ENCODE measurements at regions of chr12 and their contacts with region 1.

Region 1: DNA sequence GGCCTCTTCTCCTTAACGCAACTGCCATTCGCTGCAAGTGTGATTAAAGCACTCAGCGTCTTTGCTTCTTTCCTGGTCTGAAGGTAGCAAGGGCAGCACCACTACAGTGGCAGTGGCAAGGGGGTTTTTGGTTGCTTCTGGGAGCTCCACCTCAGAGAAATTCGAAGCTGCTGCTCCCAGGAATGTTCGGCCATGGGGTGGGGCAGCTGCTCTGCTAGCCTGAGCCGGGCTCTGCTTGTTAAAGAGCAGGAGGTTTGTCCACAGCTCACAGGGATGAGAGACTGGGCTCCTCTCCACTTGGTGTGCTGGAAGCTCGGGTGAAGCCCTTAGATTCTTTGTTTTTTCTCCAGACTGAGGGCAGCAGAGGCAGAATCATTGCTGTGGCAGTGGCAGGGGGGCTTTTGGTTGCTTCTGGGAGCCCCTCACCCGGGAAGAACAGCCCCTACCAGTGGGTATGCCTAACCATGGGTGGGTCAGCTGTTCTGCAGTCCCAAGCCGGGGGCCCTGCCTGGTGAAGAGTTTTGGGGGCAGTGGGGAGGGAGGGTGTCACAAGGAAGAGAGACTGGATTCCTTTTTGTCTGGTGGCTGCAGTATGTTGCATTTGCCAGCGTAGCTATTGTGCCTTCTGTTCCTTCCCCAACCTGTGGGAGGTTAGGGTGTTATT is 340.2 kb downstream of the AEBP2 start:
- DNase-seq: peak; percentile 60 to 78
- ATAC-seq: peak; percentile 76
- H3K4me3 ChIP-seq: peak overlapping the region in 1 of 2 donors; percentile 6
- H3K27ac ChIP-seq: peak overlapping the region; percentile 43 to 94
- H3K4me1 ChIP-seq: no peaks in the 10 kb centered on the region
- H3K27me3 ChIP-seq: no peaks in the 10 kb centered on the region

Region 2: DNA sequence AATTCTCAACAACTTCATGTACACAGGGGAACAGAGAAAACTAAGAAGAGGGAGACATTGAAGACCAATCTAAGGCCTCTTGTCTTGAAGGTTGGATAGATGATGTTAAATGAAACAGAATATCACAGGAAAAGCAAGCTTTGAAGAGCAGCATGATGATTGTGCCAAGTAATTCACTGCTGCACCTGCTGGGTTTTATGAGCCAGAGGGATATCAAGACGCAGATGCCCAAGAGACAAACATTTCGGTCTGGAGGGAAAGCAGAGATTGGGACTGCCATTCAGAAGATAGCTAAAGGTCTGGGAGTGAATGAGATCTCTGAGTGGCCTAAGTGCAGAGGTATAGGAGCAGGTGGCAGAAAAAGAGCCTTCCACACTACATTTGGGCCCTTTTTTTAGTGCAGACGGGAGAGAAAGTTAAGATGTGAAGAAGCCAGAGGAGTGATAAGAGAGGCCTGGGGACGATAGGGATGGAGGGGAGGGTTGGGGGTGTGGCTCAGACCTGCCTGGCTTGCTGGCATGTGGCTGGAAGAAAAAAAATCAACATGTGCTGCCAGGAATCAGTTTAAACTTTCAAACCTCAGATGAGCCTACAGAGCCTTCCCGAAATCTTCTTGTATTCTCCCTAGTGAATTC is 139.6 kb before region 1 on chr12:
- intact Hi-C with region 1: no loop called
- DNase-seq: no peak
- ATAC-seq: no peak
- H3K4me3 ChIP-seq: no peak overlapping the region
- H3K27ac ChIP-seq: no peak overlapping the region
- H3K4me1 ChIP-seq: peaks cover 0 to 2% of the 10 kb centered on the region in 2 donors
- H3K27me3 ChIP-seq: no peaks in the 10 kb centered on the region

Region 3: DNA sequence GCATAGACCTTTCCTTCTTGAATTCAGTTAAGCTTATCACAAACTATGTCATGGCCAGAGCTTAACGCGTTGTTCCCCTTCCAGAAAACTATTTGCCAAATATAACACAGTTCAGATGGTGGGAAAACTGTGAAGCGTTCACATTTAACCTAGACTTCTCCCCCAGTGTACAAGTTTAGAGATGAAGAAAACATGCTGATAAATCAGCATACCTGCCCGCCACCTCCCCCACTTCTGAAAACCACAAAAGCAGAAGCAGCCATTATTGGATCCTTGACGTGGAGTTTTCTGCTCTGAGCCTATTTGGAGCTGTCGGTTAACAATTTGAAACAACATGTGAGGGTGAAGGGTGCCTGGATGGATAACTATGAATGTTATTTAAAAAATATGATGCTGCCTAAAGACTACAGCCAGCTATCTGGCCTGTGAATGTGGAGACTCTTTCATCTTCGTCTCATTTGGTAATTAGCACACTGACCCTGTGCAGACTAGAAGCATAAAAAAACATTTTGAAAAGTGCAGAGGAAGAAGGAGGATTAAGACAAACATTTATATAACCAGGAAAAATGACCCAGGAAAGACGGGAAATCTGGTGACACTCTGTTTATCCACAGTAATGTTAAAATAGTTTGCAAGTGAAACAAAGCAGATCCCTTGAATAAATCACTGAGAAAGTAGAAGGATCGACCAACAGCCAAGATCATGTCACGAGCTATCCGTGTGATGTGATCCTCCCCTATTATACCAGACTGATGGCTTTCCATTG is 68.0 kb after region 1 on chr12:
- intact Hi-C with region 1: loop called in 1 of 2 experiments (anchors 5 kb)
- DNase-seq: no peak
- ATAC-seq: peak; percentile 59
- H3K4me3 ChIP-seq: peak overlapping the region in 1 of 2 donors; percentile 32
- H3K27ac ChIP-seq: peak overlapping the region; percentile 95 to 96
- H3K4me1 ChIP-seq: peaks cover 4 to 17% of the 10 kb centered on the region in 2 donors
- H3K27me3 ChIP-seq: no peaks in the 10 kb centered on the region

Region 4: GRCh38 chr12:19885092-19885812 is 105.7 kb after region 1 on chr12:
- intact Hi-C with region 1: loop called (anchors 5 to 10 kb)
- DNase-seq: peak in 1 of 2 donors; percentile 44
- ATAC-seq: peak; percentile 68
- H3K4me3 ChIP-seq: no peak overlapping the region
- H3K27ac ChIP-seq: peak overlapping the region; percentile 98 to 100
- H3K4me1 ChIP-seq: peaks cover 10 to 17% of the 10 kb centered on the region in 2 donors
- H3K27me3 ChIP-seq: no peaks in the 10 kb centered on the region

Region 5: GRCh38 chr12:19893514-19893913 is 114.0 kb after region 1 on chr12:
- intact Hi-C with region 1: loop called (anchors 5 to 10 kb)
- DNase-seq: no peak
- ATAC-seq: no peak
- H3K4me3 ChIP-seq: no peak overlapping the region
- H3K27ac ChIP-seq: peak overlapping the region in 1 of 2 donors; percentile 67
- H3K4me1 ChIP-seq: peaks cover 0 to 5% of the 10 kb centered on the region in 2 donors
- H3K27me3 ChIP-seq: no peaks in the 10 kb centered on the region

Region 6: GRCh38 chr12:19967486-19967885 is 188.0 kb after region 1 on chr12:
- intact Hi-C with region 1: loop called in 1 of 2 experiments (anchors 10 kb)
- DNase-seq: no peak
- ATAC-seq: peak; percentile 84
- H3K4me3 ChIP-seq: no peak overlapping the region
- H3K27ac ChIP-seq: peak overlapping the region; percentile 28 to 51
- H3K4me1 ChIP-seq: peaks cover 6 to 16% of the 10 kb centered on the region in 2 donors
- H3K27me3 ChIP-seq: no peaks in the 10 kb centered on the region

Region 7: GRCh38 chr12:20050221-20050620 is 270.7 kb after region 1 on chr12:
- intact Hi-C with region 1: loop called in 1 of 2 experiments (anchors 10 kb)
- DNase-seq: no peak
- ATAC-seq: no peak
- H3K4me3 ChIP-seq: no peak overlapping the region
- H3K27ac ChIP-seq: no peak overlapping the region
- H3K4me1 ChIP-seq: peaks cover 0 to 2% of the 10 kb centered on the region in 2 donors
- H3K27me3 ChIP-seq: no peaks in the 10 kb centered on the region

Region 8: DNA sequence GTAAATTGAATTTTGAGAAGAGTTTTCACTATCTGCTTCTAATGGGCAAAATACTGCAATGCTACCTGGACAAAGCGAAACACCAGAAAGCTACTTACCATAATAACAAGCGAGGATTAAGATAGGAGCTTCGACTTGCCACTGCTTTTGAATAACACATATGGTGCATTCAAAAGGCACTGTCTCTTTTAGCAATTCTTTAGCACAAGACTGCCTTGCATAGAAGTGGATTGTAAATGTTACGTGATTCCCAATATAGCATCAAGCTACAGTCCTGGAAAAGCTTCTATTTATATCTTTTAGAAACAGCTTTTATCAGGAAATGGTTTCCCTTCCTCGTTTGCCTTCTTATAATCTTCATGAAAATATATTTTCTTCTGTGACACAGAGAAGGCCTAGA is 330.2 kb after region 1 on chr12:
- intact Hi-C with region 1: loop called in 1 of 2 experiments (anchors 5 kb)
- DNase-seq: no peak
- ATAC-seq: no peak
- H3K4me3 ChIP-seq: no peak overlapping the region
- H3K27ac ChIP-seq: peak overlapping the region in 1 of 2 donors; percentile 67
- H3K4me1 ChIP-seq: peaks cover 1 to 6% of the 10 kb centered on the region in 2 donors
- H3K27me3 ChIP-seq: no peaks in the 10 kb centered on the region